Gastrocnemius medialis (tissue), 4 donors: ENCODE measurements at regions of chr13 and their contacts with region 1.

Region 1: DNA sequence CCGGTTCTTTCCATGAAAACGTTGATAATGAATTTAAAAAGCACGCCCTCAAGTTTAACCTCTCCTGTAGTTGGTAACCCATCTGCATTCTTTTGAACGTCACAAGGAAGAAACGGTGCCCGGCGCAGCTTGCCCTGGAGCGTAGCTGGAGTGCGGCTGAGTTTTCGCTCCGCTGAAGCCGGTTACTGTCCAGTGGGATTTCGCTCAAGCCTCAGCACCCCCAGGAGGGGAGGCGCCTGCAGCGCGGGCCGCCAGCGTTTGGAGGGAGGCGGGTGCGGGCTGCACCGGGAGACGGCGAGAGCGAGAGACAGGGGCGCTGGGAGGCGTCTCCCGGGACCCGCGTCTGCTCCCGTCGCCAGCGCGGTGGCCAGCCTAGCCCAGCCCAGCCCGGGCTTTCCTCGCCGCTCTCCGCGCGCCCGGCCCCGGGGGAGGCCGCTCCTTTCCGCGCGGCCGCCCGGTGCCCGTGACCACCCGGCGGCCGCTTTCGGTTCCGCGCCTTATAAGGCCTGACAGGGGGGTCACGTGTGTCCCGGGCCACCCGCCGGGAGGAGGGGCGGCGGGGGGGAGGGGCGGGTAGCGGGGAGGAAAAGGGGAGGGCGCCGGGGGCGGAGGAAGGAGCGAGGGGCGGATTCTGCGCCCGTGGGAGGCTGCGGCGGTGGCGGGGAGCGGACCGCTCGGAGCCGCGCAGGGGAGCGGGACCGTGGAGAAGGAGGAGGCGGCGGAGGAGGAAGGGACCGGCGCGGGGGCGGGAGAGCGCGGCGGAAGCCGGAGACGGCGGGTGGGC is 8.3 kb upstream of the DGKH start:
- DNase-seq: peak; percentile 89
- ATAC-seq: peak; percentile 84 to 86
- H3K4me3 ChIP-seq: peak overlapping the region; percentile 72 to 95 (median 80)
- H3K27ac ChIP-seq: peak overlapping the region; percentile 88 to 98 (median 92)
- H3K4me1 ChIP-seq: peaks cover 0 to 10% of the 10 kb centered on the region in 2 donors
- H3K27me3 ChIP-seq: no peaks in the 10 kb centered on the region
- CTCF ChIP-seq: peak in 1 of 5 experiments; percentile 18
- POLR2A ChIP-seq: peak; percentile 90 to 96

Region 2: DNA sequence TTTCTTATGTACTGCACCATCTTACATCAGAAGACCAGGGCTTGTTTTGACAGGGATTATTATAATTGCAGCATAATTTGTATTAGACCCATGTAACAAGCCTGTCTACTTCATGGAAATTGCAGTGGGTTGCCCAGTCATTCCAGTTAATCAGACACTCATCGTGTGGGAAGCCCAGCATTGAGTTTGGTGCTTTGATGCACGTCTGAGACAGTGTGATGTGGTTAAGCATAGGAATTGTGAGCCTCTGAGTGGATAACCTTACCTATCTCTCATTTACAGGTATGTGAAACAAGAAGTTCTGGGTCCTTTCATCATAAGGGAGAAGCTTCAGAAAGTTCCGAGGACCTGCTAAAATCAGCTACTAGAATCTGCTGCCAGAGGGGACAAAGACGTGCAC is 569.9 kb before region 1 on chr13:
- in situ Hi-C with region 1: no loop called
- intact Hi-C with region 1: no loop called
- DNase-seq: no peak
- ATAC-seq: no peak
- H3K4me3 ChIP-seq: no peak overlapping the region
- H3K27ac ChIP-seq: no peak overlapping the region
- H3K4me1 ChIP-seq: peaks cover 5 to 9% of the 10 kb centered on the region in 2 donors
- H3K27me3 ChIP-seq: no peaks in the 10 kb centered on the region
- CTCF ChIP-seq: no peak
- POLR2A ChIP-seq: no peak

Region 3: DNA sequence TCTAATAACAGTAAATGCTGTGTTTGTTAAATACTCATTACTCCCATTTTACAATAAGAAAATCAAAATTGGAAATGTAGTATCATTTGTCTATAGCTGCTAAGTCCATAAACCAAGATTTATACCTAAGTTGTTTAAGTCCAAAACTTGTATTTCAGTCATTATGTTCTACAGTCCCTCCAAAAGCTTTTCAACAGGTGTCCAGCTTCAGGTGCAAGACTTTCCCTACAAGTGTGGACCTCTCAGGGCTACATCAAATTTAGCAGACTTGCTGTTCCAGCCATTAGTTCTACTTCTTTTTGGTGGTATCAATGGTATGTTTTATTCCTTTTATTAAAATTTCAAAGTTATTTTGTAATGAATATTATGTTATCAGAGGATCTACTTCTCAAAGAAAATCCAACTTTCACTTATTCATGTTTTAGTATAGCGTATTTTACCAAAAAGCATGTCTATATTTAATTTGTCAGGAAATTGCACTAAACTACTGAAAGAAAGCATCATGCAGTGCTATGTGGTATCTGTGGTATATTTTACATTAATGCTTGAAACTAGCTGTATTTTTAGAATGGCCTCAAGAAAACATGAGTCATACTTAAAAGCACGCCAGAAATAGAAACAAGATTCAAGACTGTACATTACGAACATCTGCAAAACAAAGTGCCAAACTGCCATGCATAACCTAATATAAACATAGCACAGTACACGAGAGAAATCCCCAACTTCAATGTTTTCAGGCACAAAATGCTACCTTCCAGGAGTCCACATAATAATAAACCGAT is 123.8 kb before region 1 on chr13:
- in situ Hi-C with region 1: no loop called
- intact Hi-C with region 1: loop called (anchors 5 kb)
- DNase-seq: no peak
- ATAC-seq: peak; percentile 82 to 94
- H3K4me3 ChIP-seq: peak overlapping the region in 1 of 4 donors; percentile 4
- H3K27ac ChIP-seq: peak overlapping the region; percentile 50 to 77 (median 74)
- H3K4me1 ChIP-seq: peaks cover 59 to 63% of the 10 kb centered on the region in 2 donors
- H3K27me3 ChIP-seq: no peaks in the 10 kb centered on the region
- CTCF ChIP-seq: no peak
- POLR2A ChIP-seq: no peak